ENCODE measurements at regions of chr5 and their contacts with region 1.

Region 1: DNA sequence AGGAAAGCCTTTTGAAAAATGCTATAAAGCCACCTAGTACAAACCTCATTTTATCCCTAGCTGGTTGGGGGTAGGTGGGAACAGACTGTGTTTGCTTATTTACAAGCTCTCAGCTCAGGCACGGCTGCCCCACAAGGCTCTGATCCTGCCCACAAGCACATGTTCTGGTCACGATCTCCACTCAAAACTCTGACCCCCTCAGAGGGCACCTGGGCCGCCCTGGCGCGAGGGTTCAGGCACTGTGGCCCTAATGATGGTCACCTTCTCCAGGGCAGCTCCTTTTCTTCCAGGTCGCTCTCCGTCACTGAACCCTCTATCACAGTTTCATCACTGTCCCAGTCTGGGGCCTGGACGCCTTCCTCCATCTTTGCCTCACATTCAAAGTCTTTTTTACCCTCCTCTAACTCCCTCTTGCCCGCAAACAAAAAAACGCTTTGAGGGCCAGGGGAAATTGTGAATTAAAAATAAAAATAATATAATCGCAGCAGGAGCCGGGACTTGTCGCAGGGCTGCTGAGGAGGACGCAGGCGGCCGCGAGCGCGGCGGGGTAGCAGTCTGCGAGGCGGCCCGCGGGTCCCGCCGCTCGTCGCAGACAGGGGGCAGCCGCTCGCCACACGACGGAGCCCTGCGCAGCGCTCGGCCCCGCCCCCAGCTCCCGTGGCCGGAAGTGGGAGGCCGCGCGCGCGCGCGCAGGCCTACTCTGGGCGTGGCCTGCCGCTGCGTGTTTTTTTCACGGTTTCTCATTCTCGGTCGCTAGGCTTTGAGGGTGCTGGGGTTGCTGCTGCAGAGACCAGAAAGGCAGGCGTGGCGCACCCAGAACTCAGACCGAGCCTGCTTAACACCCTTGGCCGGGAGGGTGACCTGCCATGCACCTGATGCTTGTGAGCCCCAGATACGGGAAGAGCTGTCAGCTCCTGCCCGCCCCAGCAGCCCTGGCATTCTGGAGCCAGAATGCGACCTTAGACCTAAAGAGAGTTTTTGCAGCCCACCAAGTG is at the start of gene ANKRD31:
- DNase-seq: peak; percentile 9
- H3K4me3 ChIP-seq: peak within 1 kb of the TSS; percentile 69
- CTCF ChIP-seq: peak; percentile 79

Region 2: GRCh38 chr5:75053304-75054133 is 183.1 kb before region 1 on chr5:
- CTCF ChIA-PET with region 1: interaction called, 25 read pairs
- POLR2A ChIA-PET with region 1: no interaction called
- DNase-seq: peak; percentile 50
- H3K4me3 ChIP-seq: peak overlapping the region; percentile 71
- CTCF ChIP-seq: peak; percentile 26

Region 3: GRCh38 chr5:75225506-75225905 is 11.1 kb before region 1 on chr5:
- CTCF ChIA-PET with region 1: interaction called, 37 read pairs
- POLR2A ChIA-PET with region 1: no interaction called
- DNase-seq: no peak
- H3K4me3 ChIP-seq: no peak overlapping the region
- CTCF ChIP-seq: no peak

Region 4: DNA sequence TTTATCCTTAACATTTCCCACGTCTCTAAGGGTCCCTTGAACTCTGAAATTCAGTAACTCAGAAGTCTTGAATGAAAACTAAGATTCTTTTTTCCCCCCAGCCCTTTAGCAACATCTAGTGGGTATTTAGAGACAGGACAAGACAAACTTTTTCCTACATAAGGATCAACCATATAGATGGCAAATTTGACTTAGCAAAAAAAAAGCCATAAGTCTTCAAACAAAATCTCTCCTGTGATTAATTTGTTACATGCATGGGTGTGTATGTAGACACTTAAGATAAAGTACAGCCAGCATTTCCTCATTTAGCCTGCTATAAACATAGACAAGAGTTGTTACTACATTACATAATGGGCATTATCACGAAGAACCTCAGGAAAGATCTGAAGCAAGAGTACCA is 29.1 kb after region 1 on chr5:
- CTCF ChIA-PET with region 1: interaction called, 11 read pairs
- POLR2A ChIA-PET with region 1: no interaction called
- DNase-seq: peak; percentile 9
- H3K4me3 ChIP-seq: no peak overlapping the region
- CTCF ChIP-seq: peak; percentile 30

Region 5: DNA sequence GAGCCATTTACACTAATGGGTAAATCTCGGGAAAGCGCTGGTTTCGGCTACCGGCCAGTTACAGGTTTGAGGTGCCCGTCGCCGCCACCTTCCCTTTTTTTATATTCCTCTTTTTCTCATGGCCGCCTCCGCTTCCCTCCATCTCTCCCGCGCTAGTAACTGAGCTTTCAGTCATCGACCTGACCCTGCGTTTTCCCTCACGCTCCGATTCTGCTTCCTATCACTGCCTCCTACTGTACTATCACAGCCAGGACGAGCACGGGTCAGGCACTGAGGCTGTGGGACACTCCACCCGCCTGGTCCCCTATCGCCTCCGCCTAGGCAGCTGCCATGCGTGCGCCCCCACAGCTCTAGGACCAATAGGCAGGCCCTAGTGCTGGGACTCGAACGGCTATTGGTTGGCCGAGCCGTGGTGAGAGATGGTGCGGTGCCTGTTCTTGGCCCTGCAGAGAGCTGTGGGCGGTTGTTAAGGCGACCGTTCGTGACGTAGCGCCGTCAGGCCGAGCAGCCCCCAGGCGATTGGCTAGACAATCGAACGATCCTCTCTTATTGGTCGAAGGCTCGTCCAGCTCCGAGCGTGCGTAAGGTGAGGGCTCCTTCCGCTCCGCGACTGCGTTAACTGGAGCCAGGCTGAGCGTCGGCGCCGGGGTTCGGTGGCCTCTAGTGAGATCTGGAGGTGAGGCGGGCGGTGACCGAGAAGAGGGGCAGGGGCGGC is 100.2 kb after region 1 on chr5 and contains the start of gene HMGCR:
- CTCF ChIA-PET with region 1: interaction called, 11 read pairs
- POLR2A ChIA-PET with region 1: interaction called, 9 read pairs
- DNase-seq: peak; percentile 96
- H3K4me3 ChIP-seq: peak within 1 kb of the TSS; percentile 92
- CTCF ChIP-seq: peak; percentile 37

Region 6: GRCh38 chr5:75681125-75681830 is 444.7 kb after region 1 on chr5:
- CTCF ChIA-PET with region 1: interaction called, 49 read pairs
- POLR2A ChIA-PET with region 1: no interaction called
- DNase-seq: no peak
- H3K4me3 ChIP-seq: no peak overlapping the region
- CTCF ChIP-seq: peak; percentile 29

Measured in AG04449 (cell line).